ENCODE measurements at regions of chr15 and their contacts with region 1.

Region 1: GRCh38 chr15:65384895-65385858 is 7.4 kb upstream of the IGDCC3 start:
- DNase-seq: peak; percentile 93
- ATAC-seq: peak; percentile 90
- H3K4me3 Mint-ChIP-seq: peak overlapping the region; percentile 79
- H3K27ac Mint-ChIP-seq: peak overlapping the region; percentile 71
- H3K4me1 Mint-ChIP-seq: peaks cover 11% of the 10 kb centered on the region
- H3K27me3 Mint-ChIP-seq: peaks cover 10% of the 10 kb centered on the region

Region 2: DNA sequence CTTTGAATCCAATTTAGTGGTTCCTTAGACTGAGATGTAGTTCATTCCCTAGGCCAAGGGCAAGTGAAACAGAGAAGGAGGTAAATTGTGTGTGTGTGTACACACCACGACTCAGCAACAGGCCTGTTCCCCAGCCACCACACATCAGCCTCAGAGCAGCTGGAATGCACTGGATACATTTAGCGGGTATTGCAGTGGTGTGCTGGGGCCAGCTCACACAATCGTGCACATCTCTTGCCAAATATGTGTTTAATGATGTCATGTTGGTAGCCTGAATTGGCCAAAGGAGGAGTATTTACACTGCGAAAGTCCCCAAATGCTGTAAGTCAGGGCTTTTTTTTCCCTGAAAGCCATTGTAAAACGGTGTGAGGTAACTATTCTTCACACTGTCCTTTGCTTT is 692.0 kb before region 1 on chr15:
- CTCF ChIA-PET with region 1: no interaction called
- POLR2A ChIA-PET with region 1: no interaction called
- intact Hi-C with region 1: no loop called
- DNase-seq: no peak
- ATAC-seq: no peak
- H3K4me3 Mint-ChIP-seq: no peak overlapping the region
- H3K27ac Mint-ChIP-seq: peak overlapping the region; percentile 70
- H3K4me1 Mint-ChIP-seq: peaks cover 34% of the 10 kb centered on the region
- H3K27me3 Mint-ChIP-seq: no peaks in the 10 kb centered on the region

Region 3: GRCh38 chr15:65054333-65055200 is 330.6 kb before region 1 on chr15:
- CTCF ChIA-PET with region 1: no interaction called
- POLR2A ChIA-PET with region 1: no interaction called
- intact Hi-C with region 1: loop called in 1 of 2 experiments (anchors 5 kb)
- DNase-seq: peak; percentile 79
- ATAC-seq: peak; percentile 57
- H3K4me3 Mint-ChIP-seq: no peak overlapping the region
- H3K27ac Mint-ChIP-seq: no peak overlapping the region
- H3K4me1 Mint-ChIP-seq: peaks cover 10% of the 10 kb centered on the region
- H3K27me3 Mint-ChIP-seq: no peaks in the 10 kb centered on the region

Region 4: DNA sequence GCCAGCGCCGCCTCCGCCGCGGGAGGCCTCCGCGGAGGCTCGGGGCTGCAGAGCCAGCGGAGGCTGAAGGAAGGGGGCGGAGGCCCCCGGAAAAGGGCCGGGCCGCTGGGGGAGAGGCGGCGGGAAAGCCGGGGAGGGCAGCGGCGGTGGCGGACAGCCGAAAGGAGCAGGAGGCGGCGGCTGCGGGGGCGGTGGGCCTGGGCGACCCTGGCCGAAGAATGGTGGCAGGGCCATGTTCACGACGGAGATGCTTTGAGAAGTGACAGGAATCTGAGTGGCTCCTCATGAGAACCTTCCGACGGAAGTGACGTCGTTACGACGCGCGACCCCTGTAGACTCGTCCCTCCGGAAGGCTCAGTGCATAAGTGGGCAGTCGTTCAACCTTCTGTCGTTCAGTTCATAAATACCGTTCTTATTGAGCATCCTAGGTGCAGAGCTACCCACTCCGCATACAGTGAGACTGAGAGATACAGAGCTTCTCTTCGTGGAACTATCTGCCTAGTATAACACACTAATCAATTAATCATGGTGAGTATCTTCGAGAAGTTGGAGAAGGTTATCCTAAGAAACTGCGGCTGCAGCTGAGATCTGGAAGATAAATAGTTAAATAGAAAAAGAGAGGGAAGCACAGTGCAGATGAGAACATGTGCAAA is 251.5 kb before region 1 on chr15 and contains the start of gene PDCD7:
- CTCF ChIA-PET with region 1: no interaction called
- POLR2A ChIA-PET with region 1: no interaction called
- intact Hi-C with region 1: loop called in 1 of 2 experiments (anchors 1 kb)
- DNase-seq: peak; percentile 91
- ATAC-seq: peak; percentile 96
- H3K4me3 Mint-ChIP-seq: peak within 1 kb of the TSS; percentile 85
- H3K27ac Mint-ChIP-seq: peak within 1 kb of the TSS; percentile 93
- H3K4me1 Mint-ChIP-seq: peaks cover 26% of the 10 kb centered on the region
- H3K27me3 Mint-ChIP-seq: no peaks in the 10 kb centered on the region
- total RNA-seq, gene PDCD7: 16.6 to 24.8 TPM

Region 5: GRCh38 chr15:65318870-65319356 is 66.3 kb before region 1 on chr15:
- CTCF ChIA-PET with region 1: interaction called, 108 read pairs
- POLR2A ChIA-PET with region 1: interaction called, 12 read pairs
- intact Hi-C with region 1: loop called (anchors 1 kb)
- DNase-seq: peak; percentile 86
- ATAC-seq: peak; percentile 100
- H3K4me3 Mint-ChIP-seq: no peak overlapping the region
- H3K27ac Mint-ChIP-seq: no peak overlapping the region
- H3K4me1 Mint-ChIP-seq: no peaks in the 10 kb centered on the region
- H3K27me3 Mint-ChIP-seq: peaks cover 4% of the 10 kb centered on the region

Region 6: GRCh38 chr15:65373163-65373651 is 12.0 kb before region 1 on chr15:
- CTCF ChIA-PET with region 1: interaction called, 10 read pairs
- POLR2A ChIA-PET with region 1: no interaction called
- intact Hi-C with region 1: no loop called
- DNase-seq: no peak
- ATAC-seq: no peak
- H3K4me3 Mint-ChIP-seq: no peak overlapping the region
- H3K27ac Mint-ChIP-seq: no peak overlapping the region
- H3K4me1 Mint-ChIP-seq: peaks cover 8% of the 10 kb centered on the region
- H3K27me3 Mint-ChIP-seq: peaks cover 38% of the 10 kb centered on the region

Region 7: DNA sequence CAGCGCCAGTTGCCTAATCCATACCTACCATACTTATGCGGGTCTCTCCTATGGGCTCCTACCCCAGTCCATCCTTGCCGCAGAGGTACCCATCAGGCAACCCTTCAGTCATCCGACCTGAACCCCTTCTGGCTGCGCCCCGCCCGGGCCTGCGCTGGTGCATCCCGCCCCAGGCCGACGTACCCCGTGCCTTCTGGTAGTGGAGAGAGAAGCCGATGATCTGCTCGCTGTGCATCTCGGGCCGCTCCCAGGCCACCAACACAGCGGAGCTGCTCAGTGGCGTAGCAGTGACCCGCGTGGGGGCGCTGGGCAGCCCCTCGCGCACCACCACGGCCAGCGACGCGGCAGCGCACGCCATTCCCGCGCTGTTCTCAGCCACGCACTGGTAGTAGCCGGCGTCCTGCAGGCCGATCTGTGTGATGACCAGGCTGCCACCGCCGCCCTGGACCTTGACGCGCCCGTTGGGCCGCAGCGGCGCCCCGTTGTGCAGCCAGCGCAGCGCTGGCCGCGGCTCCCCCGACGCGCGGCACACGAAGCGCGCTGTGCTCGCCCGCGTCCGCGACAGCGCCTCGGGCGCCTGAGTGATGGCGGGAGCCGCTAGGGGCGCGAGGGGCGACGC is 10.5 kb after region 1 on chr15:
- CTCF ChIA-PET with region 1: interaction called, 10 read pairs
- POLR2A ChIA-PET with region 1: no interaction called
- intact Hi-C with region 1: loop called in 1 of 2 experiments (anchors 2 kb)
- DNase-seq: no peak
- ATAC-seq: peak; percentile 23
- H3K4me3 Mint-ChIP-seq: no peak overlapping the region
- H3K27ac Mint-ChIP-seq: no peak overlapping the region
- H3K4me1 Mint-ChIP-seq: peaks cover 5% of the 10 kb centered on the region
- H3K27me3 Mint-ChIP-seq: peaks cover 49% of the 10 kb centered on the region

Region 8: DNA sequence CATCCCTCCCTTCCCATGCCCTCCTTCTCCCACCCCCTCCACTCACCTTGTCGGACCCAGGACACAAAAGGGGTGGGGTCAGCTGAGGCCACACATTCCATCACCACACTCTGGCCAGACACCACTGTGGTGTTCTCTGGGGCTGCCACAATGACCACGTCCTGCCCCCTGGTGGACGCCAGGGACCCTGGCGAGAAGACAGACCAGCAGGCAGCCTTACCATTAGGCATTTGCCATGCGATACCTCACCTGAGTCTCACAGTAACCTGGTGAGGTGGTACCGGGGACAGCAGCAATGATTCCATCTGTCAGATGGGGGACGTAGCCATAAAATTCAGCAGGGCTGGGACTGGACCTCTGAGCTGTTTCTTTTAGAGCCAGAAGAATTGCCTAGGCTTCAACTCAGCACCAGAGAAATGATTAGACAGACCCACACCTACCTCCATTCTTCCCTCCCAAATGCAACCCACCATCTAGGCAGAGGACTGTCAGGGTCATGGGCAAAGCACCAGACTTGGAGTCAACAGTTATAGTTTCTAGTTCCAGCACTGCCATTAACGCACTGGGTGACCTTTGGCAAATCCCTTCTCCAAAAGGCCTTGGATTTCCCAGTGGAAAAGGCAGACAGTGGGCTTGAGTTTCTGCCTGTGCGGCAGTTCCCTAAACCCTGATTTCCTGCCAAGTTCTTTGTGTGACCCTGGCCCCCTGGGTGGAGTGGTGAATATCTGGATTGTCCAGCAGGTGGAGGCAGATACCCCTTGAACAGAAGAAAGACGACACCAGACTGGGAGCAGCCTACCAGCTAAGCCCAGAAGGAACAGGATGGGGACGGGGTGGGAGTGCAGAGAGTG is 15.8 kb after region 1 on chr15:
- CTCF ChIA-PET with region 1: interaction called, 9 read pairs
- POLR2A ChIA-PET with region 1: no interaction called
- intact Hi-C with region 1: loop called in 1 of 2 experiments (anchors 2 kb)
- DNase-seq: peak; percentile 74
- ATAC-seq: peak; percentile 87
- H3K4me3 Mint-ChIP-seq: no peak overlapping the region
- H3K27ac Mint-ChIP-seq: no peak overlapping the region
- H3K4me1 Mint-ChIP-seq: peaks cover 5% of the 10 kb centered on the region
- H3K27me3 Mint-ChIP-seq: peaks cover 41% of the 10 kb centered on the region